IMR-90 (cell line): ENCODE measurements at regions of chr14 and their contacts with region 1.

Region 1: DNA sequence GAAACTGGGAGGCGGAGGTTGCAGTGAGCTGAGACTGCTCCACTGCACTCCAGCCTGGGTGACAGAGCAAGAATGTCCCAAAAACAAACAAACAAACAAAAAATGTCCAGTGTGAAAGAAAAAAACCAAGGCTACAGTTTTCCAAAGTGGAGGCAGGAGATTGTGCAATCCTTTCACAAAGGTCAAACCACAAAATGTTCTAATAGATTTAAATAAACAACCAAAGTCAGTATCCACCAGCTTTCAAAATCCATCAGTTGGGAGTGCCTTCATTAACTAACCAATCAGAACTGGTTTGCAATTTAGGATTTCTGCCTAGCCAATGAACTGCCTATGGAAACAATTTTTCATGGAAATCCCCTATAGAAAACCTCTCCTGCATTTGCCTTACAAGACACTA is 52.3 kb upstream of the TRIM9 start:
- DNase-seq: no peak
- ATAC-seq: no peak
- H3K4me3 ChIP-seq: no peak overlapping the region
- H3K27ac ChIP-seq: no peak overlapping the region
- H3K4me1 ChIP-seq: no peaks in the 10 kb centered on the region
- H3K27me3 ChIP-seq: peaks cover 16% of the 10 kb centered on the region
- CTCF ChIP-seq: no peak
- POLR2A ChIP-seq: no peak
- RAD21 ChIP-seq: no peak

Region 2: DNA sequence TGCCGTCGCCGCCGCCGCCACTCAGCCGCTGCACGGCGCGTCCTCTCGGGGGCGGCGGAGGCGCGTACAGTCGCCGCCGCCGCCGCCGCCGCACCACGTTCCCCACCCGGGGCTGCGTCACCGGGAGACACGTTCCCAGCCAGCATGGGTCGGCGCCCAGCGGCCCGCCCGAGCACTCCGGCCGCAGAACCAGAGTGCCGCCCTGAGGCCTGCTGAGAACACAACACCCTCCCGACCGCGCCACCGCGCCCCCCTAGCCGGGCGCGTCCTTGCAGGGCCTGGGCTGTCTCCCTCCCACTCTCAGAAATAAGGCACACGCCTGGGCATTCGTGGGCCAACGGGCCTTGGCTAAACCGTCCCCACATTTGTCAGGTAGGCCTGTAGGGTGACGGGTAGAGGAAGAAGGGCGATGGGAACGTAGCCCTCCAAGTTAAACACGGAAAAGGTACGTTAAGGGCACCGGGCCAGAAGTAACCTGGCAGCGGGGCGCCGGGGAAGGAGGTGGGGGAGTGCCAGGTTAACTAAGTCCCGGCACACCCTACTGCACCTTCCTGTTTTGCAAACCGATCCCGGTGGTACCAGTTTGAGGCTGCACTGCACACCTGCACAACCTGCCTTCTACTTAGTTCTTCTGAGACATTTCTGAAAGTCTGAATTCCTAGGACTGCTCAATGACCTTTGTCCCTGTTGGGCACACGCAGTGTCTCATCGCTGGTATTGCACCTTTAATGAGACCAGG is 614.5 kb before region 1 on chr14 and contains the start of gene MAP4K5:
- CTCF ChIA-PET with region 1: no interaction called
- POLR2A ChIA-PET with region 1: no interaction called
- dilution Hi-C with region 1: no loop called
- in situ Hi-C with region 1: no loop called
- intact Hi-C with region 1: no loop called
- DNase-seq: peak; percentile 89
- ATAC-seq: peak; percentile 92
- H3K4me3 ChIP-seq: peak within 1 kb of the TSS; percentile 95
- H3K27ac ChIP-seq: peak within 1 kb of the TSS; percentile 97
- H3K4me1 ChIP-seq: peaks cover 16% of the 10 kb centered on the region
- H3K27me3 ChIP-seq: no peaks in the 10 kb centered on the region
- CTCF ChIP-seq: peak; percentile 98
- POLR2A ChIP-seq: peak; percentile 81
- RAD21 ChIP-seq: peak; percentile 98
- total RNA-seq, gene MAP4K5: 46.1 and 66.1 TPM in 2 replicates

Region 3: GRCh38 chr14:51202914-51203665 is 55.9 kb after region 1 on chr14:
- CTCF ChIA-PET with region 1: no interaction called
- POLR2A ChIA-PET with region 1: no interaction called
- dilution Hi-C with region 1: no loop called
- in situ Hi-C with region 1: no loop called
- intact Hi-C with region 1: loop called (anchors 5 kb)
- DNase-seq: no peak
- ATAC-seq: no peak
- H3K4me3 ChIP-seq: no peak overlapping the region
- H3K27ac ChIP-seq: no peak overlapping the region
- H3K4me1 ChIP-seq: no peaks in the 10 kb centered on the region
- H3K27me3 ChIP-seq: peaks cover 37% of the 10 kb centered on the region
- CTCF ChIP-seq: no peak
- POLR2A ChIP-seq: no peak
- RAD21 ChIP-seq: no peak